K562 (cell line): ENCODE measurements at regions of chr6 and their contacts with region 1.

Region 1: DNA sequence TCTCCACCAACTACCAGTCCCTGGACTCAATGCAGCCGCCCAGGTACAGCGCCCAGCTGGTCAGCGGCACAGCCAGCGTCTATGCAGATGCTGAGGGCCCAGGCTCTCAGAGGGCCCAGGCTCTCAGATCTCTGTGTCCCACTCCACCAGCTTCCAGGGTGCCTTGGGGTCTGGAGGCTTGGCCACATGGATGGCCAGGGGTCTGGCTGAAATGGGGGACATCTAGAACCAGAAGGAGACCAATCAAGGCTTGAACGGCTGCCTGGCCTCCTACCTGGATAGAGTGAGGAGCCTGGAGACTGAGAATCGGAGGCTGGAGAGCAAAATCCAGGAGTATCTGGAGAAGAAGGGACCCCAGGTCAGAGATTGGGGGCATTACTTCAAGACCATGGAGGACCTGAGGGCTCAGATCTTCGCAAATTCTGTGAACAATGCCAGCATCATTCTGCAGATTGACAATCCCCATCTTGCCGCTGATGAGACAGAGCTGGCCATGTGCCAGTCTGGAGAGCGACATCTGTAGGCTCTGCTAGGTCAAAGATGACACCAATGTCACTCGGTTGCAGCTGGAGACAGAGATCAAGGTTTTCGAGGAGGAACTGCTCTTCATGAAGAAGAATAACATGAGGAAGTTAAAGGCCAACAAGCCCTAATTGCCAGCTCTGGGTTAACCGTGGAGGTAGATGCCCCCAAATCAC is 44.1 kb upstream of the GRM4 start:
- DNase-seq: peak in 3 of 4 experiments; percentile 44 to 83 (median 70)
- ATAC-seq: peak; percentile 88
- H3K4me3 ChIP-seq: no peak overlapping the region
- H3K27ac ChIP-seq: no peak overlapping the region
- H3K4me1 ChIP-seq: peaks cover 4 to 14% of the 10 kb centered on the region in 2 experiments; a peak in 3 of 5 replicates
- H3K27me3 ChIP-seq: no peaks in the 10 kb centered on the region
- CTCF ChIP-seq: peak; percentile 38 to 59 (median 46); a peak in 4 of 6 replicates
- EP300 ChIP-seq: no peak
- POLR2A ChIP-seq: no peak
- RAD21 ChIP-seq: peak in 1 of 2 experiments; percentile 33; a peak in 2 of 4 replicates

Region 2: GRCh38 chr6:34161857-34162515 is 28.0 kb before region 1 on chr6:
- CTCF ChIA-PET with region 1: interaction called, 3 read pairs
- POLR2A ChIA-PET with region 1: no interaction called
- in situ Hi-C with region 1: no loop called
- intact Hi-C with region 1: loop called (anchors 1 kb)
- DNase-seq: no peak
- ATAC-seq: no peak
- H3K4me3 ChIP-seq: no peak overlapping the region
- H3K27ac ChIP-seq: no peak overlapping the region
- H3K4me1 ChIP-seq: no peaks in the 10 kb centered on the region
- H3K27me3 ChIP-seq: peaks cover 8 to 20% of the 10 kb centered on the region in 2 experiments; a peak in 3 of 5 replicates
- CTCF ChIP-seq: no peak
- EP300 ChIP-seq: no peak
- POLR2A ChIP-seq: no peak
- RAD21 ChIP-seq: no peak